Activated T-helper 1 cell treated with anti-CD3 and anti-CD28 coated beads, Interleukin-12 subunit alpha, Interleukin-12 subunit beta, Interleukin-2, Interleukin-4 antibody, amounts not matched to agents 30 ng/mL and 10 ng/mL and 1 ng/mL, durations not matched to agents 14 hours and 24 hours and 36 hours (primary cell): ENCODE measurements at regions of chr10 and their contacts with region 1.

Region 1: GRCh38 chr10:118840071-118840775 is 85.5 kb upstream of the CACUL1 start:
- DNase-seq: peak; percentile 11
- H3K4me3 Mint-ChIP-seq: peak overlapping the region; percentile 11
- H3K27ac Mint-ChIP-seq: peak overlapping the region; percentile 52
- H3K4me1 Mint-ChIP-seq: peaks cover 7% of the 10 kb centered on the region
- H3K27me3 Mint-ChIP-seq: no peaks in the 10 kb centered on the region

Region 2: GRCh38 chr10:118405928-118406327 is 434.3 kb before region 1 on chr10:
- intact Hi-C with region 1: no loop called
- DNase-seq: no peak
- H3K4me3 Mint-ChIP-seq: no peak overlapping the region
- H3K27ac Mint-ChIP-seq: no peak overlapping the region
- H3K4me1 Mint-ChIP-seq: no peaks in the 10 kb centered on the region
- H3K27me3 Mint-ChIP-seq: peaks cover 9% of the 10 kb centered on the region

Region 3: GRCh38 chr10:118720685-118721538 is 119.3 kb before region 1 on chr10:
- intact Hi-C with region 1: loop called (anchors 10 kb)
- DNase-seq: peak; percentile 34
- H3K4me3 Mint-ChIP-seq: no peak overlapping the region
- H3K27ac Mint-ChIP-seq: no peak overlapping the region
- H3K4me1 Mint-ChIP-seq: peaks cover 15% of the 10 kb centered on the region
- H3K27me3 Mint-ChIP-seq: no peaks in the 10 kb centered on the region

Region 4: DNA sequence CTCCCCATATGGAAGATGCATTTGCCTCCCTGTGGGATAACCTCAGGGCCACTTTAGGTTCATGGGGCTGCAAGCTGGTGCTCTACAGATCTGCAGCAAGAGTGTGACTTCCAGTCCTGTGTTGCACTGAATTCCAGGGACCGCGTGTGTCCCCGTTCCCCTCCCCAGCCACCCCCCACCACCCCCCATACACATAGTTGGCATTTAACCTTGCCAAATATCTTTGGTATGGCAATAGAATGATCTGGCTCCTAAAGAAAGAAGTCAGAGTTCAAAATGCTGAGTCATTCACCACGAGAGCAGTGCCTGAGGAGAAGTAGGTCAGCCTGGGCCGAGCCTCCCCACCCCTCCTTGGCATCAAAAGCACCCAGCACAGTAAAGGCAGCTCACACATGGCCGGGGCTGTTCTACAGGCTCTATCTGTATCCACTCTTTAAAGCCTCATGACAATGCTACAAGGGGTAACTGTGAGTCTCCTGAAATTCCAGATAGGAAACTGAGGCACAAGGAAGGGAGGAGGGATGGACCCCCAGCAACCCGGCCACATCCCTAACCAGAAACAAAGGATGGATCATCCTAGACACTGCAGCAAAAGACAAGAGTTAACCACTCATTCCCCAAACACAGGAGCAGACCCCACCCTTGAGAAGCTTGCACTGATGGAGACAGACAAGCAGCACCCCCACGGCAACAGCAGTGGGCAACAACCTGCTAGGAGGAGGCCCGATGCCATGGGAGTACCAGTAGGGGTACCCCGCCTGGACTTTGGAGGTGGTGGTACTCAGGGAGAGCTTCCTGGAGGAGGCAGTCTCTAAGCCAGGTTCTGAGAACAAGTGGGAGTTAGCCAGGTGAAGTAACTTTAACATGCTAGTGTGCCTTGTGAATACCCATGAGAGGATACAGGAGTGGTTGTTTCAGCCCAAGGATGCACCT is 119.0 kb after region 1 on chr10:
- intact Hi-C with region 1: no loop called
- DNase-seq: no peak
- H3K4me3 Mint-ChIP-seq: no peak overlapping the region
- H3K27ac Mint-ChIP-seq: no peak overlapping the region
- H3K4me1 Mint-ChIP-seq: peaks cover 5% of the 10 kb centered on the region
- H3K27me3 Mint-ChIP-seq: peaks cover 5% of the 10 kb centered on the region